HCT116 (cell line): ENCODE measurements at regions of chr11 and their contacts with region 1.

Region 1: DNA sequence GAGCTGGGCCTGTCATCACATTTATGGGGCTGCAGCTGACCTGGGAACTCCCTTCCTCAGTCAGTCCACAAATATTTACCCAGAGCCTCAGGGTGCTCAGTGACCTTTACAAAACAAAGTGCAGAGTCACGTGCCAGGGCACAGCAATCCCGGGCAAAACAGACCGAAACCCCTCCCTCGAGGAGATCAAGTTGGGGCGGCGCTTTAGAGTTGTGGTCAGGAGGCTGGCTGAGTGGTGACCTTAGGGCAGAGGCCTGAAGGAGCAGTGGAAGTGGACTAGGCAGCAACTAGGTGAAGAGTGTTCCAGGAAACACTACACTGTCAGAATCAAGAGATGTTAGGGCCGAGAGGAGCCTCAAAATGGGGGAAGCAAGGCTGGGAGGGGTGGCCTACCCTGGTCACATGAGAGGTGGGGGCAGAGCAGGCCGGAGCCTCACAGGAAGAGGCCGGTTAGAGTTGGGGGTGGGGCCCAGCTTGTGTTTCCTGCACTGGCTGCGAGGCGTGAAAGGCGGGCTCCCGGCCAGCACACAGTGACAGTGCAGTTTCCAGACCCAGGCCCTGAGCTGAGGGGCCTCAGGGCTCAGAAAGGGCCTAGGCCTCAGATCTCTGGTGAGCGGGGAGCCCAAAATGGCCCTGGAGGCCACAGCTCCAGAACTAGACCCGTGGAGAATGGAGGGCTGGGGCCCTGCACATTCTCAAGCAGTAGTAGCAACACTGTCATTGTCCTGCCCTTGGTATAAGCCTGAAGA is 3.7 kb upstream of the NEAT1 start:
- DNase-seq: peak; percentile 84
- ATAC-seq: peak; percentile 59
- H3K4me3 ChIP-seq: peak overlapping the region; percentile 40 to 56
- H3K27ac ChIP-seq: peak overlapping the region; percentile 100
- H3K4me1 ChIP-seq: peaks cover 53 to 84% of the 10 kb centered on the region in 2 experiments
- H3K27me3 ChIP-seq: no peaks in the 10 kb centered on the region
- CTCF ChIP-seq: no peak
- POLR2A ChIP-seq: peak; percentile 87
- RAD21 ChIP-seq: no peak

Region 2: GRCh38 chr11:65432686-65433582 is 14.0 kb after region 1 on chr11:
- CTCF ChIA-PET with region 1: no interaction called
- POLR2A ChIA-PET with region 1: interaction called, 11 read pairs
- RAD21 ChIA-PET with region 1: interaction called, 4 to 5 read pairs
- intact Hi-C with region 1: loop called (anchors 1 kb)
- DNase-seq: no peak
- ATAC-seq: peak; percentile 61
- H3K4me3 ChIP-seq: no peak overlapping the region
- H3K27ac ChIP-seq: no peak overlapping the region
- H3K4me1 ChIP-seq: peaks cover 0 to 13% of the 10 kb centered on the region in 2 experiments; a peak in 2 of 4 replicates
- H3K27me3 ChIP-seq: no peaks in the 10 kb centered on the region
- CTCF ChIP-seq: peak in 2 of 3 experiments; percentile 30 to 38; a peak in 3 of 6 replicates
- POLR2A ChIP-seq: no peak
- RAD21 ChIP-seq: peak; percentile 66